ENCODE measurements at regions of chr11 and their contacts with region 1.

Region 1: DNA sequence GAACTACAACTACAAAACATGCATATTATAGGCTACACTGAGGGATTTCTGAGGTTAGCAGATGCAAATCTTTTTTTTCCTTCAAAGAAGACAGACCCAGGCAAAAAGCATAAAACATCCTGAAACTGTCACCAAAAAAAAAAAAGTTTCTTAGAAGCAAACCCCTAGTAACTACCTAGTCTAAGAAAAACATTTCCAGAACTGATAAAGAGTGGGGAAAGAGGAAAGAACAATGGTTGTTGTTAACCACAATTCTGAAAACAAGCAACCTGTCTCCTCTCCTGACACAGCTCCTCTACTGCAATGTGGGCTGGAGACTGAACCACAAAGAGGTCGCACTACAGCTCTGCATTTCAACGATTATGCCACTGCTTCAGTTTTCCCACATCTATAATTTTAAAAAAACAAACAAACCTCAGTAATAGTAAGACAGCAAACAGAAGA is 15.0 kb downstream of the DENND5A start:
- DNase-seq: no peak
- H3K4me3 ChIP-seq: no peak overlapping the region
- H3K27ac ChIP-seq: no peak overlapping the region
- H3K4me1 ChIP-seq: peaks cover 0 to 12% (median 2%) of the 10 kb centered on the region in 4 donors
- H3K27me3 ChIP-seq: no peaks in the 10 kb centered on the region
- CTCF ChIP-seq: no peak
- EP300 ChIP-seq: no peak
- POLR2A ChIP-seq: no peak

Region 2: GRCh38 chr11:10916674-10917073 is 1666.5 kb after region 1 on chr11:
- in situ Hi-C with region 1: no loop called
- intact Hi-C with region 1: loop called (anchors 5 kb)
- DNase-seq: no peak
- H3K4me3 ChIP-seq: no peak overlapping the region
- H3K27ac ChIP-seq: no peak overlapping the region
- H3K4me1 ChIP-seq: no peaks in the 10 kb centered on the region
- H3K27me3 ChIP-seq: no peaks in the 10 kb centered on the region
- CTCF ChIP-seq: no peak
- EP300 ChIP-seq: no peak
- POLR2A ChIP-seq: no peak

Measured in transverse colon (tissue), 4 donors.